CD14-positive monocyte (primary cell): ENCODE measurements at regions of chr21 and their contacts with region 1.

Region 1: GRCh38 chr21:41768437-41769061 is 1.7 kb upstream of the RIPK4 start:
- DNase-seq: peak in 1 of 3 donors; percentile 41
- H3K4me3 ChIP-seq: peak overlapping the region; percentile 7 to 65 (median 14)
- H3K4me3 Mint-ChIP-seq: peak overlapping the region; percentile 74 to 91
- H3K27ac ChIP-seq: no peak overlapping the region
- H3K27ac Mint-ChIP-seq: peak overlapping the region in 1 of 7 donors; percentile 41
- H3K4me1 ChIP-seq: peaks cover 32 to 38% of the 10 kb centered on the region in 2 donors
- H3K4me1 Mint-ChIP-seq: peaks cover 26% of the 10 kb centered on the region
- H3K27me3 ChIP-seq: peaks cover 55 to 81% of the 10 kb centered on the region in 2 donors
- H3K27me3 Mint-ChIP-seq: peaks cover 75 to 97% (median 86%) of the 10 kb centered on the region in 3 donors
- CTCF ChIP-seq: no peak

Region 2: DNA sequence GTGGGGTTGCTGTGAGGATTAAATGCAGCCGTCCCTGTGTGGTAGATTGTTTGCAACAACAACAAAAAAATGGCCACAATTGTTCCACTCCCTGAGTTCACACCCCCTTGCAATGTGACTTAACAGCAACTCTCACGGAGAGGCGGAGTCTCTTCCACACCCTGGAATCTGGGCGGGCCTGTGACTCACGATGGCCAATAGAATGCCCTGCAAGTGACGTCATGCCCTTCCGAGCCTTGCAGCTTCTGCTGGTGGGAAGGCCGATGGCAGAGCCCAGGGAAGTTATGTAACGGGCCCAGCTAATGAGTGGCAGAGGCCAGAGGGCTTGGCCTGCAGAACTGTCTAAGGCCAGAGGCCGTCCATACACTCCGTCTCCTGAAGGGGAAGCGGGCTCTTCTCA is 89.6 kb before region 1 on chr21:
- intact Hi-C with region 1: loop called (anchors 5 to 10 kb)
- DNase-seq: peak; percentile 99
- H3K4me3 ChIP-seq: peak overlapping the region in 1 of 3 experiments; percentile 60
- H3K4me3 Mint-ChIP-seq: peak overlapping the region in 1 of 2 donors; percentile 74
- H3K27ac ChIP-seq: peak overlapping the region; percentile 62 to 93
- H3K27ac Mint-ChIP-seq: peak overlapping the region; percentile 87 to 93 (median 91)
- H3K4me1 ChIP-seq: peaks cover 22 to 28% of the 10 kb centered on the region in 2 donors
- H3K4me1 Mint-ChIP-seq: peaks cover 34% of the 10 kb centered on the region
- H3K27me3 ChIP-seq: no peaks in the 10 kb centered on the region
- H3K27me3 Mint-ChIP-seq: peaks cover 3 to 10% (median 7%) of the 10 kb centered on the region in 3 donors
- CTCF ChIP-seq: no peak

Region 3: DNA sequence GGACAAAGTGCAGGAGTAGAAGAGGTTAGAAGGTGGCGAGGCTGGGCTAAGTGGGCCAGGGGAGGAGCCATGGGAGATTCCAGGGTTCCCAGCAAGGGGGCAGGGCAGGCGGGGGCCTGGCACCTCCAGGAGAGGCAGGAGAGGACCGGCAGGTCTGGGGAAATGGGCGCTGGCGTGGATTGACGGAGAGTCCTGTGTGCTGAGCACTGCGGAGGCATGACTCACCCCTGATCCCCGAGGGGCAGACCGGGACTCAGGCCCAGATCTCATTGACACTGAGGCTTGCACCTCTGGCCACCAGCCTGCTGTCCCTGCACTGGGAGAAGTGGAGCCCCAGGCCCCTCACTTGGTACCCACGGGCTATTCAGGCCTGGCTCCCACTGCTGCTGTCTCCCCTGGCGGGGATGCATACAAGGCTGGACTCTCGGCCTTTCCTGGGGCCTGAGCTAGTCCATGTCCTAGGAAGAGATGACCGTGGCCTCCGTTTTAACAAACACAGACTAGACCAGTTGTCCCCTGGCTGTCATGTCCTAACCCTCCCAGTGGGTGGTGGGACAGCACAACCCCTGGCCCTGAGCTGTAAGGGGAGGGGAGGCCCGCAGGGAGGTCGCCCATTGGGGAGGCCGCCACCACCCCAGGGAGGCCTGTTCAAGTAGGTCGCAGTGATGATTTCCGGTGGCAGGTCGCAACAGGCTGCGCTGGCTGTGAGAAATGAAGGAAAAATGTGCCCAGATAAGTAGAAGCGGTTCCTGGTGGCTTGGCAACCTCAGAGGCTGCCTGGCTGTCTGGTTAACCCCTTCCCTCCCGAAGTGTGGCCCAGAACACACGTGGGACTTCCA is 41.4 kb before region 1 on chr21:
- intact Hi-C with region 1: loop called in 1 of 2 experiments (anchors 5 kb)
- DNase-seq: no peak
- H3K4me3 ChIP-seq: peak overlapping the region in 1 of 3 experiments; percentile 73
- H3K4me3 Mint-ChIP-seq: peak overlapping the region in 1 of 2 donors; percentile 89
- H3K27ac ChIP-seq: peak overlapping the region in 1 of 2 donors; percentile 81
- H3K27ac Mint-ChIP-seq: peak overlapping the region in 1 of 7 donors; percentile 4
- H3K4me1 ChIP-seq: peaks cover 35 to 48% of the 10 kb centered on the region in 2 donors
- H3K4me1 Mint-ChIP-seq: peaks cover 44% of the 10 kb centered on the region
- H3K27me3 ChIP-seq: peaks cover 0 to 18% of the 10 kb centered on the region in 2 donors
- H3K27me3 Mint-ChIP-seq: peaks cover 34 to 66% (median 53%) of the 10 kb centered on the region in 3 donors
- CTCF ChIP-seq: no peak